Activated CD4-positive, alpha-beta T cell treated with anti-CD3 and anti-CD28 coated beads for 36 hours (primary cell): ENCODE measurements at regions of chr19 and their contacts with region 1.

Region 1: GRCh38 chr19:9565900-9566705 is 18.2 kb downstream of the ZNF121 start:
- DNase-seq: no peak
- ATAC-seq: peak; percentile 26
- H3K4me3 Mint-ChIP-seq: no peak overlapping the region
- H3K27ac Mint-ChIP-seq: no peak overlapping the region
- H3K4me1 Mint-ChIP-seq: no peaks in the 10 kb centered on the region
- H3K27me3 Mint-ChIP-seq: no peaks in the 10 kb centered on the region

Region 2: GRCh38 chr19:9413240-9413954 is 152.7 kb before region 1 on chr19:
- CTCF ChIA-PET with region 1: no interaction called
- POLR2A ChIA-PET with region 1: no interaction called
- intact Hi-C with region 1: loop called in 1 of 2 experiments (anchors 5 kb)
- DNase-seq: no peak
- ATAC-seq: no peak
- H3K4me3 Mint-ChIP-seq: no peak overlapping the region
- H3K27ac Mint-ChIP-seq: no peak overlapping the region
- H3K4me1 Mint-ChIP-seq: no peaks in the 10 kb centered on the region
- H3K27me3 Mint-ChIP-seq: no peaks in the 10 kb centered on the region

Region 3: GRCh38 chr19:9528757-9529336 is 37.3 kb before region 1 on chr19:
- CTCF ChIA-PET with region 1: no interaction called
- POLR2A ChIA-PET with region 1: no interaction called
- intact Hi-C with region 1: loop called in 1 of 2 experiments (anchors 5 kb)
- DNase-seq: no peak
- ATAC-seq: no peak
- H3K4me3 Mint-ChIP-seq: no peak overlapping the region
- H3K27ac Mint-ChIP-seq: no peak overlapping the region
- H3K4me1 Mint-ChIP-seq: no peaks in the 10 kb centered on the region
- H3K27me3 Mint-ChIP-seq: no peaks in the 10 kb centered on the region